Activated CD4-positive, alpha-beta T cell treated with anti-CD3 and anti-CD28 coated beads, Interleukin-2, amount 10 ng/mL, durations not matched to agents 24 days and 14 days (primary cell): ENCODE measurements at regions of chr9 and their contacts with region 1.

Region 1: DNA sequence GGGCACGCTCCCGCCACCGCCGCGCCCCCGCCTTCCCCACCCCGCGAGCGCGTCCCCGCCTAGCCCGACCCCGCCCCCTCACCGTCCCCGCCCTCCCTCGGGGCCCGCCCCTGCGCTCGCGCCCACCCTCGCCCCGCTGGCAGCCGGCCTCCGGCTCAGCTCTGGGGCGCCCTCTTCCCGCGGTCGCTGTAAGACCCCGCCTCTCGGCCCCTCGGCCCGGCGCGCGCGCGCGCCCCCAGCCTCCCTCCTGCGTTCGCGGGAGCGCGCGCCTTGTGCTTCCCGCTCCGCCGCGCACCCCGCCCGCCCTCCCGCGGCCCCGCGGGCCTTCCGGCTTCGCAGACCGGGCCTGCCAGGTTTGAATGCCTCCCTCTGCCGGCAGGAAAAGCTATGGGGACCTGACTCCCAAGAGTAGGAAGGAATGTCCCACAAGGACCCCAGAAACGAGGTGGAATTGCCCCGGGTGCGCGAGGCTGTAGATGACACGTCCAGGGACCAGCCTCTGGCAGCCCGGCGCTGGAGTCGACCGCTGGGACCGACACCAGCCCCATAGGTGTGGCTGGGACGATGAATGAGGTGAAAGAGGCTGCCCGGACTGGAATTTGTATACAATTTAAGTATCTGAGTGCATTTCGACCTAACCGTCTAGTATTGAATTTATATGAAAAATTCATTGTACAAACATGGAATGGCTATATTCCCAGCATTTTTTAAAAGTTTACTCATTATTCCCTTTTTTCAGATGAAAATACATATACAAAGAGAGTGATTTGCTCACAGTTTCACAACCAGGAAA is 416 bp upstream of the PTBP3 start:
- DNase-seq: peak; percentile 96
- H3K4me3 Mint-ChIP-seq: peak overlapping the region; percentile 92
- H3K27ac Mint-ChIP-seq: peak overlapping the region; percentile 99
- H3K4me1 Mint-ChIP-seq: peaks cover 28% of the 10 kb centered on the region
- H3K27me3 Mint-ChIP-seq: no peaks in the 10 kb centered on the region

Region 2: GRCh38 chr9:111896353-111896958 is 437.4 kb before region 1 on chr9 and contains the start of gene UGCG:
- intact Hi-C with region 1: loop called (anchors 5 kb)
- DNase-seq: peak; percentile 97
- H3K4me3 Mint-ChIP-seq: peak within 1 kb of the TSS; percentile 96
- H3K27ac Mint-ChIP-seq: peak within 1 kb of the TSS; percentile 88
- H3K4me1 Mint-ChIP-seq: peaks cover 22% of the 10 kb centered on the region
- H3K27me3 Mint-ChIP-seq: no peaks in the 10 kb centered on the region
- total RNA-seq, gene UGCG: 19.9 and 22.4 TPM in 2 replicates

Region 3: DNA sequence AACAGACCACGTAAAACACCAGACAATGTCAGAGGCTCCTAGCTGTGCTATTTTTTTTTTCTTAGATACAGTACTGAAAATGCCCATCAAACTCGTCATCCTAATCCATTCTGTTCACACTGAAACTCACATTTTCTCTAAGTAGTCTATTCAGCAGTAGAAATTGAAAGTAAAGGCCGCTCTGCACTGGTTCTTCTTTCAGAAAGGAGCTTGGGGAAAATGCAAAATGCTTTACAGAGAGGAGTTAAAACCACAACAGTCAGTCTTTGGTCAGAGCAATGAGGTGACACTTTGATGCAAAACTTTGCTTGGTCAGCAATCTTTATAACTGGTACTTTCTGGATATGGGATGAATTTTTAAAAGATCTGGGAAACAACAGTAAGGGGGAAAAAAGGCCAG is 114.9 kb before region 1 on chr9:
- intact Hi-C with region 1: loop called (anchors 2 kb)
- DNase-seq: peak; percentile 80
- H3K4me3 Mint-ChIP-seq: peak overlapping the region; percentile 69
- H3K27ac Mint-ChIP-seq: peak overlapping the region; percentile 89
- H3K4me1 Mint-ChIP-seq: peaks cover 25% of the 10 kb centered on the region
- H3K27me3 Mint-ChIP-seq: no peaks in the 10 kb centered on the region

Region 4: DNA sequence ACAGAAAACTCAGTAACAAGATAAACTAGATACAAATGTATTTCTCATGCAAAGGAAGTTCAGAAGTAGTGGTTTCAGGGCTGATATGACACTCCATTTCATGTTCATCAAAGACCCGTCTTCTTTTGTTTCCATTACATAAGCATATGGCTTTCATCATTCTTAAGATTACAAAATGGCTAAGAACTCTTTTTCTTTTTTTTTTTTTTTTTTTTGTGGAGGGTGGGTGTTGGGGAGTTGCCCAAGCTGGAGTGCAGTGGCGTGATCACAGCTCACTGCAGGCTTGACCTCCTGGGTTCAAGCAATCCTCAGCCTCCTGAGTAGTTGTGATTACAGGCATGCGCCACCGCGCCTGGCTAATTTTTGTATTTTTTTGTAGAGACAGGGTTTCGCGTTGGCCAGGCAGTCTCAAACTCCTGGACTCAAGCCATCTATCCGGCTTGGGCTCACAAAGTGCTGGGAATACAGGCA is 21.6 kb after region 1 on chr9:
- intact Hi-C with region 1: loop called (anchors 2 kb)
- DNase-seq: no peak
- H3K4me3 Mint-ChIP-seq: no peak overlapping the region
- H3K27ac Mint-ChIP-seq: peak overlapping the region; percentile 62
- H3K4me1 Mint-ChIP-seq: peaks cover 18% of the 10 kb centered on the region
- H3K27me3 Mint-ChIP-seq: no peaks in the 10 kb centered on the region

Region 5: GRCh38 chr9:112717661-112718341 is 384.0 kb after region 1 on chr9 and contains the start of gene INIP:
- intact Hi-C with region 1: loop called (anchors 1 kb)
- DNase-seq: peak; percentile 99
- H3K4me3 Mint-ChIP-seq: peak within 1 kb of the TSS; percentile 94
- H3K27ac Mint-ChIP-seq: peak within 1 kb of the TSS; percentile 99
- H3K4me1 Mint-ChIP-seq: peaks cover 16% of the 10 kb centered on the region
- H3K27me3 Mint-ChIP-seq: no peaks in the 10 kb centered on the region
- total RNA-seq, gene INIP: 34.2 and 36.2 TPM in 2 replicates